IMR-90 (cell line): ENCODE measurements at regions of chr16 and their contacts with region 1.

Region 1: GRCh38 chr16:9123871-9124270 is 32.4 kb downstream of the HAPSTR1 start:
- DNase-seq: no peak
- ATAC-seq: no peak
- H3K4me3 ChIP-seq: no peak overlapping the region
- H3K27ac ChIP-seq: no peak overlapping the region
- H3K4me1 ChIP-seq: peaks cover 21% of the 10 kb centered on the region
- H3K27me3 ChIP-seq: no peaks in the 10 kb centered on the region
- CTCF ChIP-seq: no peak
- POLR2A ChIP-seq: no peak
- RAD21 ChIP-seq: no peak

Region 2: GRCh38 chr16:8958344-8959167 is 165.3 kb before region 1 on chr16:
- CTCF ChIA-PET with region 1: no interaction called
- POLR2A ChIA-PET with region 1: interaction called, 13 read pairs
- dilution Hi-C with region 1: no loop called
- in situ Hi-C with region 1: no loop called
- intact Hi-C with region 1: no loop called
- DNase-seq: peak; percentile 69
- ATAC-seq: peak; percentile 30
- H3K4me3 ChIP-seq: no peak overlapping the region
- H3K27ac ChIP-seq: peak overlapping the region; percentile 7; the same call in 1 of the 2 replicates
- H3K4me1 ChIP-seq: peaks cover 37% of the 10 kb centered on the region
- H3K27me3 ChIP-seq: no peaks in the 10 kb centered on the region
- CTCF ChIP-seq: no peak
- POLR2A ChIP-seq: no peak
- RAD21 ChIP-seq: no peak

Region 3: DNA sequence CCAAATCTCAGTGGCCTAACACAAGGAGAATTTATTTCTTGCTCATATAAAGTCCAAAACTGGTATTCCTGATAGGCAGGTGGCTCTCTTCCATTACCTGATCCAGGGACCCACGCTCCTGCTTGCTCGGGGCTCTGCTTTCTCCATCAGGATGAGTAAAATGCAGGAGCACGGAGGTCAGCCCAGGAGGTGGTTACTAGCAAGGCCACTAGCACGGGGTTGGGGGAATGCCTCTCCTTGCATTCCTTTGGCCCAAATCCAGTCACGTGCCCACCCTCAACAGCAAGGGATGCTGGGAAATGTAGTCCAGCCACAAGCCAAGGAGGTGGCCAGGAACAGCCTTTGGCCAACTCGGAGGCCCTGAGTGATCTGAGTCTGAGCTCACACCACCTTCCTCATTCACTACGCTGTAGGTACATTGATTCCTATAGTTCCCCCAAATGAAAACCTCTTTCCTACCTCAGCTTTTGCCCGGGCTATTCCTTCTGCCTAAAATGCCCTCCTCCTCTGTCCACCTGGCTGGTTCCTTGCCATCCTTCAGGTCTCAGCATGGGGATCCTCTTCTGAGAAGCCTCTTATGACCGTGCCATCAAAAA is 70.8 kb before region 1 on chr16:
- CTCF ChIA-PET with region 1: no interaction called
- POLR2A ChIA-PET with region 1: no interaction called
- dilution Hi-C with region 1: no loop called
- in situ Hi-C with region 1: no loop called
- intact Hi-C with region 1: no loop called
- DNase-seq: peak; percentile 75
- ATAC-seq: peak; percentile 36
- H3K4me3 ChIP-seq: no peak overlapping the region
- H3K27ac ChIP-seq: no peak overlapping the region
- H3K4me1 ChIP-seq: peaks cover 17% of the 10 kb centered on the region
- H3K27me3 ChIP-seq: no peaks in the 10 kb centered on the region
- CTCF ChIP-seq: no peak
- POLR2A ChIP-seq: no peak
- RAD21 ChIP-seq: no peak

Region 4: DNA sequence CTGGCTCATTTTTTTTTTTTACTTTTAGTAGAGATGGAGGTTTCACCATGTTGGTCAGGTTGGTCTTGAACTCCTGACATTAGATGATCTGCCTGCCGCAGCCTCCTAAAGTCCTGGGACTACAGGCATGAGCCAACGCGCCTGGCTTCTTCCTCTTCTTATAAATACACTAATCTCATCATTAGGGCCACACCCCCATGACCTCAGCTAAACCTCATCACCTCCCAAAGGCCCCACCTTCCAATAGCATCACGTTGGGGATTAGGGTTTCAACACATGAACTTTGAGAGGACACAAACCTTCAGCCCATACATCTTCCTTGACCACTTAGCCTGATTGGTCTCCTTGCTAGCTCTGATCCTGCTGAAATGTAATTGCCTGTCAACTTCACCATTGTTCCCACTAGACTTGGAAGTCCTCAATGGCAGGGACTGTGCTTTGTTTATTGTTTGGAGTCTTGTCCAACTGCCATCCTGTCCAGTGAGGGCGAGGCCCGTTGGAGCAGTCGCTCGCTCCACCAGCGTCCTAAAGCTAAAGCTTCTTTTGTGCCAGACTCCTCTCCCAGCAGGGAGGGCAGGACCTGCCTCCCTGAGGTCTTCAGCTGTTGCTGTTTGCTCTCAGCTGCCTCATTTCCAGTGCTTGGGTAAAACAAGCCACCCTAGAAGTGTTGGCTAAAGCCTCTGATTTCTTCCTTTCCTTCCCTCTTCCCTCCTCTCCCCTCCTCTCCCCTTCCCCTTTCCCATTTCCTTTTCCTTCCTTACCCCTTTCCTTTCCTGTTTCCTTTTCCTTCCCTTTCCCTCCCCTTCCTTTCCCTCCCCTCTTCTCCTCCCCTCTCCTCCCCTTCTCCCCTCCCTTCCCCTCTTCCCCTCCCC is 52.9 kb after region 1 on chr16:
- CTCF ChIA-PET with region 1: no interaction called
- POLR2A ChIA-PET with region 1: no interaction called
- dilution Hi-C with region 1: no loop called
- in situ Hi-C with region 1: no loop called
- intact Hi-C with region 1: no loop called
- DNase-seq: no peak
- ATAC-seq: no peak
- H3K4me3 ChIP-seq: no peak overlapping the region
- H3K27ac ChIP-seq: no peak overlapping the region
- H3K4me1 ChIP-seq: no peaks in the 10 kb centered on the region
- H3K27me3 ChIP-seq: no peaks in the 10 kb centered on the region
- CTCF ChIP-seq: no peak
- POLR2A ChIP-seq: no peak
- RAD21 ChIP-seq: no peak

Region 5: DNA sequence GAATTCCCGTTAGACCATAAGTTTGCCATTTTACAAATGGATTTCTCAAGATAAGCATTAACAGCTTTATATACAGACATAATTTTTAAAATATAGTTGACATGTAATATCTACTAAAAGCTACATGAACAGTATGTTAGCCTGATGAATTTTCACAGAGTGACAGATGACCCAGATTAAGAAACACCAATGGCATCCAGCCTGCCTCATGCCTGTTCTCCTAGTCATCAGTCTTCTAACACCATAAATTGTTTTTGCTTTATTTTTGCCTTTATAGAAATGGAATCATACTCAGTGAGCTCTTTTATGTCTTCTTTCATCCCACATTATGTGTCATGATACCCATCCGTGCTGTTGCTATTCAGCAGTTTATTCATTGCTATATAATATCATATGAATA is 1342.0 kb after region 1 on chr16:
- CTCF ChIA-PET with region 1: interaction called, 10 read pairs
- POLR2A ChIA-PET with region 1: no interaction called
- dilution Hi-C with region 1: no loop called
- in situ Hi-C with region 1: no loop called
- intact Hi-C with region 1: no loop called
- DNase-seq: peak; percentile 3
- ATAC-seq: no peak
- H3K4me3 ChIP-seq: no peak overlapping the region
- H3K27ac ChIP-seq: no peak overlapping the region
- H3K4me1 ChIP-seq: no peaks in the 10 kb centered on the region
- H3K27me3 ChIP-seq: no peaks in the 10 kb centered on the region
- CTCF ChIP-seq: no peak
- POLR2A ChIP-seq: no peak
- RAD21 ChIP-seq: no peak

Region 6: DNA sequence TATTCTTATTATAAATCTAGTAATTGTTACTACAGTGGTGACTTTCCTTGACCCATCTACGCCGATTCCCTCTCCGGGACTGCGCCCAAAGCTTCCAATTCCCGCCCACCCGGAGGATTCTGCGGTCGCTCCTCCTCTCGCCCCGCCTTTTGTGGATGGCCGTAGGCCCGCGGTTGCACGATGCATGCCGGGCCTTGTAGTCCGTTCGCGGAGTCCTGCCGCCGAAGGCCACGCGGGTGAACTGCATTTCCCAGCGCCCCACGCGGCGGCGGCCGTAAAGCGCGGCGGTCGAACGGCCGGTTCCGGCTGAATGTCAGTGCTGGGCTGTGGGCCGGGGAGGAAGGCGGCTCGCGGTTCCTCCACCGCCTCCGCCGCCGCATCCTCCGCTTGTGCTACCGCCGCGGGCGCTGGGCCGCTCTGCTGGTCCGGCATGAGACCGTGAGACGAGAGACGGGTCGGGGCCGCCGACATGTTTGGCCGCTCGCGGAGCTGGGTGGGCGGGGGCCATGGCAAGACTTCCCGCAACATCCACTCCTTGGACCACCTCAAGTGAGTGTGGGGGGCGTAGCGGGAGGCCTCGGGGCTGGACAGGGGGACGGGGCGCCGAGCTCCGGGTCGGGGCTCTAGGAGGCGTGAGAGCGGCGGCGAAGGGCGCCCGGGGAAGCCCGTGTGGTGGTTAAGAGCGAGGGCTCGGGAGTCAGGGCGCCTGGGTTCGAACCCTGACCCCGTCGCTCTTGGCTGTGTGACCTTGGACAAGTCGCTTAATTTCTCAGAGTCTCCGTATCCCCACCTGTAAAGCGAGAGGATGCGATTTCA is 1820.6 kb after region 1 on chr16 and contains the start of gene CLEC16A:
- CTCF ChIA-PET with region 1: no interaction called
- POLR2A ChIA-PET with region 1: no interaction called
- dilution Hi-C with region 1: no loop called
- in situ Hi-C with region 1: loop called (anchors 25 kb)
- intact Hi-C with region 1: no loop called
- DNase-seq: peak; percentile 96
- ATAC-seq: peak; percentile 80
- H3K4me3 ChIP-seq: peak within 1 kb of the TSS; percentile 83
- H3K27ac ChIP-seq: peak within 1 kb of the TSS; percentile 68
- H3K4me1 ChIP-seq: peaks cover 21% of the 10 kb centered on the region
- H3K27me3 ChIP-seq: no peaks in the 10 kb centered on the region
- CTCF ChIP-seq: no peak
- POLR2A ChIP-seq: peak; percentile 75
- RAD21 ChIP-seq: no peak
- total RNA-seq, gene CLEC16A: 16.5 and 18.3 TPM in 2 replicates